Naive thymus-derived CD4-positive, alpha-beta T cell (primary cell): ENCODE measurements at regions of chr2 and their contacts with region 1.

Region 1: DNA sequence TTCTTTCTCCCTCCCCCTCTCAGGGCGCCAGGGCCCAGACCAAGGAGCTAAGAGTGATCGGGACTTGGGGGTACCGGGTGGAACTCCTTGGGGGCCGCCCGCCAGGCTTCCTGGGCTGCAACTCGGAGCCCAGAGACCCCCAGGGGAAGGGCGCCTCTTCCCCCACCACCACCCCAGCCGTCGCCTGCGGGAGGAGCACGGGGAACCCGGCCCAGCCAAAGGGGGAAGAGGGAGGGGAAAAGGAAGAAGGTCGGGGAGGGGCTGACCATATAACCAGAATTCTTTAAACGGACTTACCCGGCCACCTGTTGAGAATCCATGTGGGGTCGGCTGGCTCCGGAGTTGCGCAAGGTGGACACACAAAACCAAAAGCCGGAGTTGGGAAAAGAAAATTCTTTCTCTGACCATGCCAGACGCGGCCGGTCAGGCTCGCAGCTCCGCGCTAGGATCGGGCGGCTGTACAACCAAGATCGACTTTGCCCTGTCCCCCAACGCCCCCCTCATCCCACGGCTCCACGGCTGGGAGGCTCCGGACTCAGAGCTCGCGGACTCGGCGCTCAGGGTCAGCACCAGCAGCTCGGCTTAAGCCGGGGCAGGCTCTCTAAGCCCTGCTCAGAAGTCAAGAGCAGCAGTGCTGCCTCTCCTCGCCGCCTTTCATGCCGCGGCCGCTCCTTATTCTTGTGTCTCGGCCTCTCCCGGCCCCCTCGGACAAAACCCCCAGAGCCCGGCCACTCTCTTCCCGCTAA is 6.3 kb upstream of the SIX3 start:
- DNase-seq: no peak
- ATAC-seq: no peak
- H3K4me3 ChIP-seq: no peak overlapping the region
- H3K4me3 Mint-ChIP-seq: peak overlapping the region in 1 of 10 donors; percentile 30
- H3K27ac ChIP-seq: no peak overlapping the region
- H3K27ac Mint-ChIP-seq: no peak overlapping the region
- H3K4me1 ChIP-seq: no peaks in the 10 kb centered on the region
- H3K4me1 Mint-ChIP-seq: peaks cover 8 to 57% (median 39%) of the 10 kb centered on the region in 7 donors
- H3K27me3 ChIP-seq: peaks cover 9% of the 10 kb centered on the region in 2 donors
- H3K27me3 Mint-ChIP-seq: peaks cover 54 to 86% (median 71%) of the 10 kb centered on the region in 5 donors

Region 2: GRCh38 chr2:44778671-44779476 is 156.3 kb before region 1 on chr2:
- CTCF ChIA-PET with region 1: no interaction called
- POLR2A ChIA-PET with region 1: no interaction called
- intact Hi-C with region 1: no loop called
- DNase-seq: no peak
- ATAC-seq: peak; percentile 80
- H3K4me3 ChIP-seq: no peak overlapping the region
- H3K4me3 Mint-ChIP-seq: no peak overlapping the region
- H3K27ac ChIP-seq: no peak overlapping the region
- H3K27ac Mint-ChIP-seq: no peak overlapping the region
- H3K4me1 ChIP-seq: no peaks in the 10 kb centered on the region
- H3K4me1 Mint-ChIP-seq: peaks cover 0 to 9% (median 0%) of the 10 kb centered on the region in 7 donors
- H3K27me3 ChIP-seq: no peaks in the 10 kb centered on the region
- H3K27me3 Mint-ChIP-seq: peaks cover 0 to 12% (median 0%) of the 10 kb centered on the region in 5 donors

Region 3: DNA sequence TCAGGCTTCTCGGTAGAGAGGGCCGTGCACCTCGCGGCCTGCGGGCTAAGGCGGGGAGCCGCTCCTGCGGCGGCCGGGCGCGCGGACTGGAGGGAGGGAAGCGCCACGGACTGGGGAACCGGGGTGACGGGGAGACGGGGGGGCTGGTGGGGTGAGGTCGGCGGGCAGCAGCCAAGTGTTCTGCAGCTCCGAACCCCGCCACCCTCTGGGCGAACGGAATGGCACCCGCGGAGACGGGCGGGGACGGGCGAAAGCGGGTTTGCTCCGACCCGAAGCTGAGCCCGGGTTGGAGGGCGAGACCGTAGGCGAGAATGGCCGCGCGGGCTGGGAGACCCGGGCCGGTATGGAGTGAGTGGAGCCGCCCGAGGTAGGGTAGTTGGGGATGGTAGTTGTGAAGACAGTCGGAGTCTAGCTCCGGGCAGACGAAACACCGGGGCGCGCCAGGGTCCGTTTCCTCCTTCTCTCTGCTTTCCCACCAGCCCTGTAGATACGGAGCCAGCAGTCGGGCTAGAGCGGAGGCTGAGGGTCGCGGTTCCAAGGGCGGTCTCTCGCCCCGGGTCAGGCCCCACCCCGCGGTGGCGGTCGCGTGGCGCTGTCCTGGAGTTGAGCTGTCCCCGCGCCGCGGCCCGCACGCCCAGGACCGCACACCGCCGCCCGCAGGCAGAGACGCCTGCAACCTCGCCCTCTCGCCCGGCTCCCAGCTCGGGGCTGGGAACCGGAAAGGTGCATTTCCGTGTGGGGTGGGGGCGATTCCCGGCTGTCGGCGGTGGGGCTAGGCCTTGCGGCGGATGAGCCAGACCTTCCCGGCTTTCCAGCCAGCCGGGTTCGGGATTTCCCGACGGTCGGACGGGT is 234.4 kb after region 1 on chr2:
- CTCF ChIA-PET with region 1: no interaction called
- POLR2A ChIA-PET with region 1: no interaction called
- intact Hi-C with region 1: loop called in 1 of 2 experiments (anchors 5 kb)
- DNase-seq: peak in 1 of 9 donors; percentile 21
- ATAC-seq: no peak
- H3K4me3 ChIP-seq: no peak overlapping the region
- H3K4me3 Mint-ChIP-seq: peak overlapping the region in 4 of 10 donors; percentile 37 to 64 (median 48)
- H3K27ac ChIP-seq: no peak overlapping the region
- H3K27ac Mint-ChIP-seq: no peak overlapping the region
- H3K4me1 ChIP-seq: no peaks in the 10 kb centered on the region
- H3K4me1 Mint-ChIP-seq: peaks cover 0 to 15% (median 4%) of the 10 kb centered on the region in 7 donors
- H3K27me3 ChIP-seq: peaks cover 4% of the 10 kb centered on the region in 2 donors
- H3K27me3 Mint-ChIP-seq: peaks cover 62 to 79% (median 77%) of the 10 kb centered on the region in 5 donors